Sciatic nerve (tissue), 2 donors: ENCODE measurements at regions of chr1 and their contacts with region 1.

Region 1: GRCh38 chr1:182955596-182956588 is 2.9 kb upstream of the SHCBP1L start:
- DNase-seq: no peak
- ATAC-seq: peak; percentile 60

Region 2: DNA sequence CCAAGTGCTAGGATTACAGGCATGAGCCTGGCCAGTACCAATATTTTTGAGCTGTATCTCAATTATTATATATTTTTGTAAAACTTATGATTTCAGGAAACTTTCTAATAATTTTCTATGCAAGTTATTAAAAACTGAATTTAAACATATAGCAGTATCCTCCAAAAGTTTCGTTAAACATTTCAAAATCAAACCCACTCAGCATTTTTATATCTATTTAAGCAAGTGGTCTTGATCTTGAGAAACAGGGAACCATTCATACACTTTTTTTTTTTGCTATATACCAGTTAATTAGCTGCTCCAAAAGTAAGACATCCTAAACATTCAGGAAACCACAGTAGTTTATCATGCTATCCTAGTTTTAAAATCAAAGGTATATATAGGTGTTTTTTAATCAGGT is 24.9 kb before region 1 on chr1:
- intact Hi-C with region 1: loop called (anchors 1 kb)
- DNase-seq: no peak
- ATAC-seq: no peak

Region 3: DNA sequence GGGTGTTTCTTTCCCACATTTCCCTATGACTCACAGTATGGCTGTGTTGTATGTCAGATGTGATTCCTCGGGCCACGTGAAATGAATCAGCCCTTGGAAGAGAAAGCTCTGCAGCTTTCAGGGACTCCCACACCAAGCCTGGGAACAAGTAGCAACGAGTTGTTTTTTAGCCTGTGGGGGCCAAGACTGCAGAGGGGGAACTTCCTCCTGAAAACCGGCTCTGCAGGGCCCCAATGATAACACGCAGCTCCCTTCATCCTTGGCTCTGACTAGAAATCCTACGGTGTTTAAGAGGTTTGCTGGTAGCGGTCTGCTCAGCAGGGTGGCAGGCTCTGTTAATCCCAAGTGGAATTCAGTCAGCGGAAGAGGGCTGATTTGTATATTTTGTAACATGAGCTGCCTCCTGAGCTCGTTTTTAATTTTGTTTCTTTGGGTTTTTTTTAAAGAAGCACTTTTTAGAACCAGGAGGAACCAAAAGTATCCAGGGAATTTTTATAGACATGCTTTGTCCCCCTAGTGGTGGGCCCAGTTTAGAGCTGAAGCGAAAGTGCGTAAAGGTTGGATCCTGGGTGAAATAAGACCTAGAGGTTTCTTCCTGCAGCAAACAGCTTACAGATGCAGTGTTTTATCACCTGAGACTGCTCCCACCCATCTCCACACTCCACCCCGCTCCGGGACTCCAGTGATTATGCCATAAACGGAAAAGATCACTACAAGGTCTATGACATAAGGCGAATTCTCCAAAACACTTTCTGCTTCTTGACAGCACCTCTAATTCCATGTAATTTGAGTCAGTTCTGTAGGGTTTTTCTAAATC is 279.0 kb after region 1 on chr1:
- intact Hi-C with region 1: loop called (anchors 10 kb)
- DNase-seq: peak; percentile 75
- ATAC-seq: peak; percentile 93